Right cardiac atrium (tissue), 5 donors: ENCODE measurements at regions of chr11 and their contacts with region 1.

Region 1: GRCh38 chr11:46659908-46660307 is 40.5 kb downstream of the ARHGAP1 start:
- DNase-seq: peak in 2 of 3 donors; percentile 65 to 87
- ATAC-seq: peak; percentile 58 to 63
- H3K4me3 ChIP-seq: no peak overlapping the region
- H3K27ac ChIP-seq: no peak overlapping the region
- H3K4me1 ChIP-seq: peaks cover 6% of the 10 kb centered on the region
- H3K27me3 ChIP-seq: no peaks in the 10 kb centered on the region

Region 2: DNA sequence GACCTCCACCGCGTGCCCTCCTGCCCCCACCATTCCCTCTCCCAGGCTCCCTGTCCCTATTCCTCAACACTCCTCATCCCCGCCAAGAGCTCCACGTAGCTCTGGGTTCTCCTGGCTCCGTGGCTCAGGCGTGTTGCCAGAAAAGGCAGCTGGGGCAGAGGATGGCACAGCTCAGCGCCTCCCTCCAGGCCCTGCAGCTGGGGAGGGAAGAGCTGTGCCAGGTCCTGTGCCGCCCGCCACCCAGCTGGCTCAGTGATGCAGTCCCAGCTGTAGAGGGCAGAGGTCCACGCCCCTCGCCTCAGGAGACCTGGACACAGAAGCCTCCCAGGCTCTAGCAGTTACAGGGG is 36.3 kb after region 1 on chr11:
- intact Hi-C with region 1: loop called in 1 of 4 experiments (anchors 5 kb)
- DNase-seq: peak; percentile 70 to 89 (median 86)
- ATAC-seq: peak; percentile 23 to 49
- H3K4me3 ChIP-seq: no peak overlapping the region
- H3K27ac ChIP-seq: peak overlapping the region; percentile 55
- H3K4me1 ChIP-seq: peaks cover 16% of the 10 kb centered on the region
- H3K27me3 ChIP-seq: no peaks in the 10 kb centered on the region